Posterior cingulate gyrus (tissue), 11 donors: ENCODE measurements at regions of chr7 and their contacts with region 1.

Region 1: GRCh38 chr7:73738612-73739374 is at the start of gene ABHD11:
- DNase-seq: peak; percentile 98 to 100 (median 99)

Region 2: GRCh38 chr7:73842247-73842895 is 103.6 kb after region 1 on chr7 and contains the start of gene METTL27:
- intact Hi-C with region 1: loop called (anchors 5 kb)
- DNase-seq: peak; percentile 83 to 99 (median 92)

Region 3: GRCh38 chr7:73952266-73952665 is 213.5 kb after region 1 on chr7:
- intact Hi-C with region 1: no loop called
- DNase-seq: no peak